ENCODE measurements at regions of chr2 and their contacts with region 1.

Region 1: GRCh38 chr2:181483876-181484275 is 26.7 kb downstream of the ITGA4 start:
- DNase-seq: no peak
- H3K4me3 ChIP-seq: no peak overlapping the region
- H3K27ac ChIP-seq: no peak overlapping the region
- H3K4me1 ChIP-seq: no peaks in the 10 kb centered on the region
- H3K27me3 ChIP-seq: no peaks in the 10 kb centered on the region
- CTCF ChIP-seq: no peak
- EP300 ChIP-seq: no peak
- POLR2A ChIP-seq: no peak
- RAD21 ChIP-seq: no peak

Region 2: DNA sequence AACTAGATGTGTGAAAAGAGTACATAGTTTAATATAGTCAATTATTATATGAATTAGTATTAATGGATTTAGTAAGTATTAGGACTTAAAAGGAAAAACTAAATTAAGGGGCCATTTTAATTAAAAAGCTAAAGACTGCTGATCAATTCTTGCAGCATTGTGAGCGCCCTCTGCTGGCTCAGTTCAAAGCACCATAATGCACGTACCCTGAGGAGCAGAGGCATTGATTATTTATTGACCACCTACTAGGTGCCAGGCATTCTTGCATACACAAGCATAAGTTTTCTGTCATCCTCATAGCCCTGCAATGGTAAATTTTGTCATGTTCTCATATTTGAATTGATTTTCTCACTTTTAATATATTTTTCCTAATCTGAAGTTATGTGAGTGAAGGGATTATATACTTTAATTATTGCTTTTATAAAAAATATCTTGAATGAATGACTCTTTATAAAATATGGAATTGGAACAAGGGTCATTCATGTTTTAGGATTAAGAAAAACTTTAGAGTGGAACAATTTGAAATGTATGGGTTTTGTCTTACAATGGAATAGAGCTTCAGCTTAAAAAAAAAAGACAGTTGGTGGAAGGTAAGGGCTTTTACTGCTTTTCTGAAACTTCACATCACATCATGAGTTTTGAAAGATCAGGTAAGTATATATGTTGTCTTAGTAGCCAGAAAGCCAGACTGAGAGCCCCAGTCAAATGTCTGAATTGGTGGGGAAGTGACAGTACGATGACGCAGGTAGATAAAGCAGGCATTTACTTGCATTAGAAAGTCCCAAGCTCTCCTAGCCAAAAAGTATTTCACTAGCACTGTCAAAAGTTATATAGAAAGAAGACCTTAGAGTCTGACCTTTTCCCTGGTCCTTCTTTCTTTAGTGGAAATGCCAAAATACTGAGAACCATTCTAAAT is 17.0 kb before region 1 on chr2:
- CTCF ChIA-PET with region 1: interaction called, 17 read pairs
- POLR2A ChIA-PET with region 1: no interaction called
- DNase-seq: peak in 1 of 2 experiments; percentile 76
- H3K4me3 ChIP-seq: no peak overlapping the region
- H3K27ac ChIP-seq: no peak overlapping the region
- H3K4me1 ChIP-seq: peaks cover 0 to 5% (median 0%) of the 10 kb centered on the region in 4 experiments; a peak in 1 of 7 replicates
- H3K27me3 ChIP-seq: no peaks in the 10 kb centered on the region
- CTCF ChIP-seq: peak; percentile 54 to 74 (median 72)
- EP300 ChIP-seq: no peak
- POLR2A ChIP-seq: no peak
- RAD21 ChIP-seq: peak; percentile 68 to 74

Region 3: DNA sequence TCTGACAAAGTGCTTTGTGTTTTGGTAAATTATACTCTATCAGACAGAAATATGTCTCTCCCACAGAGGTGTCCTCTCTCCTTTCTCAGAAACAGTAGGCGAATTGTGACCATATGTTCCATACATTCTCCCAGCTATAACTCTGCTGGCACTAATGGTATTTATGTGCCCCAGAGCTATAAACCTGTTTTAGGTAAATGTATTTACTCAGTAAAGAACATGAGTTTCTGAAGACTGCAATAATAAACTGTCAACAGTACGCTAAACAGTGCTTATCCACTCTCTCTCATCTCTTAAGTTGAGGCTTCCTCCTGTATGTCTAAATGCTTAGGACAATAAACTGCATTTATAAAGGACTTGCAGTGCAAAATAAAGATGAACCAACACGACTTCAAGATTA is 31.8 kb after region 1 on chr2:
- CTCF ChIA-PET with region 1: no interaction called
- POLR2A ChIA-PET with region 1: no interaction called
- DNase-seq: no peak
- H3K4me3 ChIP-seq: no peak overlapping the region
- H3K27ac ChIP-seq: no peak overlapping the region
- H3K4me1 ChIP-seq: 0 out of 7 replicates have a peak, but pooled peaks cover 0 to 3% (median 0%) of the 10 kb centered on the region in 4 experiments
- H3K27me3 ChIP-seq: no peaks in the 10 kb centered on the region
- CTCF ChIP-seq: no peak
- EP300 ChIP-seq: no peak
- POLR2A ChIP-seq: no peak
- RAD21 ChIP-seq: no peak

Measured in H1 (cell line).